Posterior vena cava (tissue), 2 donors: ENCODE measurements at regions of chr3 and their contacts with region 1.

Region 1: DNA sequence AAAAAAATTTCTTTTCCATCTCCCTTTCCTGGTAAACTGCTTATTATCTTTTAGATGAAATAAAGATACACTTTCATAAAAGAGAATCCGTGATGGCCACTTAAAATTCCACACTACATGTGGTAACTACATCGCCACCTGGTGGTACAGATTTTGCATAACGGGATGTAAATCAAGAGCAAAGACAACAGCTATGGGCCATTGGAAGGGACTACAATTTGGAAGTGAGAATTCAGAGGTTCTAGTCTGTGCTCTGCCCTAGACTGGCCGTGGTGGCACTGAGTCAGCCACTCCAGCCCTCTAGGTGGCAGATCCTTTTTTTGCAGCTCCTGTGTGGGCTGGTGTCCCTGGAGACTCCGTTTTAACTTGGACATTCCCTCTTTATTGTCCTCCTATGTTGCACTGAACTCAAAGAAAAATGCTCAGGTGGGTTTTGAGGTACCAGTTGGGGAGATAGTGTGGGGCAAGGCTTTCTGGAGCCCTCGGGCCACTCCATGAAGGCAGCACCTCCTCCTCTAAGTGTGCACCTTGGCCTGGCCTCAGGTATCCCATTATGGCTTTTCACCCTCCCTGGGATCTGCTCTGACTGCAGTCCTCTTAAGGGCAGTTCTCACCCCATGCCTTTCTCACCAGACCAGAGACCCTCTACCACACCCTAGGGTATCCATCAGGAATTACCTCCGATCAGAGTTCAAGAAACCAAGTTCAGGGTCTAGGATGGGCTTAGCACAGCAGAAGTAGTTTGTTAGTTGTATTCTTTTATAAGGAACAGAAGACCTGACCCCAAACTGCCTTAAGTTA is 54.9 kb downstream of the SPSB4 start:
- DNase-seq: peak; percentile 43

Region 2: GRCh38 chr3:141011232-141011996 is 94.6 kb before region 1 on chr3:
- intact Hi-C with region 1: loop called (anchors 5 to 10 kb)
- DNase-seq: peak; percentile 93

Region 3: DNA sequence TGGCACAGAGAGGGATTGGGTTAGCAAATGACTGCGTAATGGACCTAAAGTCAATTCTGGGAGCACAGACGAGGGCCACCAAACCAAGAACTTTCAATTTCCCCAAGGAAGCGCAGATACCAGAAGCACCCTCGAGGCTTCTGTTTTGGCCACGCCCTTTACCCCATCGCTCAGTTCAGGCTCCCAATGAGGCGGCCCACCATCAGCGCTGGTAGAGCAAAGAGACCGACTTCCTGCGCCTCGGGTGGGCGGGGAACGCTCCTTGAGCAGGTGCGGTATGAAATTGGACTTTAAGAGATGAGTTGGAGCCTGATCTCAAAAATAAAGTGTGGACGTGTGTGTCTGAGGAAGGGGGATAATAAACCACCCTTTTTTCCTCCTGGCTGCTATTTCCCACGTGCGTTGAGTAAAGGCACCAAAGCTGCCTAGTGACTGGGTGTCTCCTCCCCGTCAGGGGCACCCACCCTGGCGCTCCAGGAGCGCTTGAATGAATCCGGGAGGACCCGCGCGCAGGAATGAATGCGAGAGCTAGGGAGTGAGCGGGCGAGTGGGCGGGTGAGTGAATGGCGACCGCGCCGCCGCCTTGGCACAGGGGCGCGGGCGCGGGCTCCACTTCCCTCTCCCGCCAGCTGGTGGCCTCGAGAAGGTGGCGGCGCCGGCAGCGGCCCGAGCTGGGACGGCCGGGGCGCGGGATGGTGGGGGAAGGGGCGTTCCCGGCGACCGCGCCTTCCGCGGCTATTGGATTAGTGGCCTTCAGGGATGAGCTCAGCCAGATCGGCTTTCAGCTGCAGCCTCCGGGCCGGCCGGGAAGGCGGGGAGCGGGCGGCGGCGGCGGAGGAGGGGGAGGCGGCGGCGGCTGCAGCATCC is 55.2 kb before region 1 on chr3 and contains the start of gene SPSB4:
- intact Hi-C with region 1: loop called in 1 of 2 experiments (anchors 10 kb)
- DNase-seq: peak; percentile 85
- total RNA-seq, gene SPSB4: 0.76 to 3.1 TPM